PC-3 (cell line): ENCODE measurements at regions of chr13 and their contacts with region 1.

Region 1: GRCh38 chr13:103203735-103204330 is 137.6 kb upstream of the SLC10A2 start:
- DNase-seq: no peak
- ATAC-seq: no peak
- H3K4me3 ChIP-seq: no peak overlapping the region
- H3K27ac ChIP-seq: no peak overlapping the region
- H3K4me1 ChIP-seq: no peaks in the 10 kb centered on the region
- H3K27me3 ChIP-seq: no peaks in the 10 kb centered on the region
- CTCF ChIP-seq: no peak

Region 2: DNA sequence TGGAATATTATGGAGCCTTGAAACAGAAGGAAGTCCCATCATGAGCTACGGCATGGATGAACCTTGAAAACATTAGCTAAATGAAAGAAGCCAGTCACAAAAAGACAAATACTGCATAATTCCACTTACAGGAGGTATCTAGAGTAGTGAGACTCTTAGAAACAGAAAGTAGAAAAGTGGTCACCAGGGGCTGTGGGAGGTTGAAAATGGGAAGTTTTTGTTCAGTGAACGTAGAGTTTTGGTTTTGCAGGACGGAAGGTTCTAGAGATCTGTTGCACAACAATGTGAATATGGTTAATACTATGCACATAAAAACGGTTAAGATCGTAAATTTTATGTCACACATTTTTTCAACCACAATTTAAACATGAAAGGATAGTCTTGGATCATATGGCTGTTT is 125.7 kb before region 1 on chr13:
- CTCF ChIA-PET with region 1: no interaction called
- POLR2A ChIA-PET with region 1: no interaction called
- intact Hi-C with region 1: no loop called
- DNase-seq: no peak
- ATAC-seq: no peak
- H3K4me3 ChIP-seq: no peak overlapping the region
- H3K27ac ChIP-seq: no peak overlapping the region
- H3K4me1 ChIP-seq: no peaks in the 10 kb centered on the region
- H3K27me3 ChIP-seq: peaks cover 37% of the 10 kb centered on the region
- CTCF ChIP-seq: no peak

Region 3: GRCh38 chr13:103218253-103218652 is 14.4 kb after region 1 on chr13:
- CTCF ChIA-PET with region 1: no interaction called
- POLR2A ChIA-PET with region 1: no interaction called
- intact Hi-C with region 1: loop called (anchors 1 kb)
- DNase-seq: peak; percentile 16
- ATAC-seq: peak; percentile 73
- H3K4me3 ChIP-seq: no peak overlapping the region
- H3K27ac ChIP-seq: no peak overlapping the region
- H3K4me1 ChIP-seq: peaks cover 4% of the 10 kb centered on the region; the same call in 1 of the 2 replicates
- H3K27me3 ChIP-seq: no peaks in the 10 kb centered on the region
- CTCF ChIP-seq: no peak